ENCODE measurements at regions of chr9 and their contacts with region 1.

Region 1: GRCh38 chr9:83992421-83992820 is 11.8 kb downstream of the RMI1 start:
- DNase-seq: no peak
- ATAC-seq: no peak

Region 2: GRCh38 chr9:83665580-83666200 is 326.7 kb before region 1 on chr9:
- intact Hi-C with region 1: no loop called
- DNase-seq: no peak
- ATAC-seq: no peak

Region 3: GRCh38 chr9:84139296-84140070 is 147.1 kb after region 1 on chr9:
- intact Hi-C with region 1: loop called (anchors 10 kb)
- DNase-seq: no peak
- ATAC-seq: peak; percentile 73

Measured in left ventricle myocardium superior (tissue), 1 donor.